PC-3 (cell line): ENCODE measurements at regions of chr14 and their contacts with region 1.

Region 1: GRCh38 chr14:51205486-51205885 is 34.6 kb upstream of the TMX1 start:
- DNase-seq: no peak
- ATAC-seq: no peak
- H3K4me3 ChIP-seq: no peak overlapping the region
- H3K27ac ChIP-seq: no peak overlapping the region
- H3K4me1 ChIP-seq: peaks cover 9% of the 10 kb centered on the region; the same call in 1 of the 2 replicates
- H3K27me3 ChIP-seq: no peaks in the 10 kb centered on the region
- CTCF ChIP-seq: no peak

Region 2: GRCh38 chr14:51176839-51177238 is 28.6 kb before region 1 on chr14:
- CTCF ChIA-PET with region 1: no interaction called
- POLR2A ChIA-PET with region 1: no interaction called
- intact Hi-C with region 1: no loop called
- DNase-seq: no peak
- ATAC-seq: no peak
- H3K4me3 ChIP-seq: no peak overlapping the region
- H3K27ac ChIP-seq: no peak overlapping the region
- H3K4me1 ChIP-seq: peaks cover 23% of the 10 kb centered on the region
- H3K27me3 ChIP-seq: no peaks in the 10 kb centered on the region
- CTCF ChIP-seq: no peak

Region 3: GRCh38 chr14:51188566-51189185 is 16.8 kb before region 1 on chr14:
- CTCF ChIA-PET with region 1: no interaction called
- POLR2A ChIA-PET with region 1: no interaction called
- intact Hi-C with region 1: loop called (anchors 1 kb)
- DNase-seq: peak; percentile 61
- ATAC-seq: peak; percentile 71
- H3K4me3 ChIP-seq: no peak overlapping the region
- H3K27ac ChIP-seq: peak overlapping the region; percentile 68
- H3K4me1 ChIP-seq: peaks cover 22% of the 10 kb centered on the region
- H3K27me3 ChIP-seq: no peaks in the 10 kb centered on the region
- CTCF ChIP-seq: no peak

Region 4: GRCh38 chr14:51328064-51328771 is 122.7 kb after region 1 on chr14:
- CTCF ChIA-PET with region 1: no interaction called
- POLR2A ChIA-PET with region 1: no interaction called
- intact Hi-C with region 1: no loop called
- DNase-seq: peak; percentile 41
- ATAC-seq: peak; percentile 38
- H3K4me3 ChIP-seq: no peak overlapping the region
- H3K27ac ChIP-seq: no peak overlapping the region
- H3K4me1 ChIP-seq: peaks cover 15% of the 10 kb centered on the region
- H3K27me3 ChIP-seq: no peaks in the 10 kb centered on the region
- CTCF ChIP-seq: no peak